CD14-positive monocyte (primary cell): ENCODE measurements at regions of chr9 and their contacts with region 1.

Region 1: DNA sequence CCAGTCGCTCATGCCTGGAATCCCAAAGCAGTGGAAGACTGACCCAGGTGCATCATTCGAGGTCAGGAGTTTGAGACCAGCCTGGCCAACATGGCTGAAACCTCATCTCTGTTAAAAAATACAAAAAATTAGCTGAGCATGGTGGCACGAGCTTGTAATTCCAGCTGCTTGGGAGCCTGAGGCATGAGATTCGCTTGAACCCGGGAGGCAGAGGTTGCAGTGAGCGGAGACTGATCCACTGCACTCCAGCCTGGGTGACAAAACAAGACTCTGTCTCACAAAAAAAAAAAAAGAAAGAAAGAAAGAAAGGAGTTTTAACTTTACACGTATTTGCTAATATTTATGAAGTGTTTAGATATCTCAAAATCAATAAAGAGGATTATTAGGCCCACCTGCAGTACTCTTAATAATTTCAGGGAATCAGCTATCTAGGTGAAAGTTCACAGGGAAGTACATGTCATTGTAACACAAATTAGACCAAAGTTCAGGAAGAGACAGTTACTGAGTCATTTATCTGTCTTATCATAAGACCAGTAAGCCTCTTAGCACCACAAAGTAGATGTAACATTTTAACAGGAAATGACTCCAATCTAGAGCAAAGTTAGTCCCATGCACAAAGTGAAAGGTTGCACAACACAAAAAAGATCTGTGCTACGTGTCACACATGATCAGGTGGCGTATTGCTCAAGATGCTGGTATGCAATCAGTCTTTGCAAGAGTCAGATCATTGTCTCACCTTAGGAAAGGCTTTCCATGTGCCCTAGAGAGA is 34.1 kb upstream of the PLIN2 start:
- DNase-seq: peak; percentile 97 to 100 (median 100)
- H3K4me3 ChIP-seq: peak overlapping the region in 1 of 3 experiments; percentile 65
- H3K4me3 Mint-ChIP-seq: peak overlapping the region; percentile 23 to 54
- H3K27ac ChIP-seq: peak overlapping the region; percentile 98 to 99
- H3K27ac Mint-ChIP-seq: peak overlapping the region; percentile 94 to 100 (median 99)
- H3K4me1 ChIP-seq: peaks cover 51 to 53% of the 10 kb centered on the region in 2 donors
- H3K4me1 Mint-ChIP-seq: peaks cover 45% of the 10 kb centered on the region
- H3K27me3 ChIP-seq: no peaks in the 10 kb centered on the region
- H3K27me3 Mint-ChIP-seq: peaks cover 0 to 7% (median 0%) of the 10 kb centered on the region in 3 donors
- CTCF ChIP-seq: no peak

Region 2: DNA sequence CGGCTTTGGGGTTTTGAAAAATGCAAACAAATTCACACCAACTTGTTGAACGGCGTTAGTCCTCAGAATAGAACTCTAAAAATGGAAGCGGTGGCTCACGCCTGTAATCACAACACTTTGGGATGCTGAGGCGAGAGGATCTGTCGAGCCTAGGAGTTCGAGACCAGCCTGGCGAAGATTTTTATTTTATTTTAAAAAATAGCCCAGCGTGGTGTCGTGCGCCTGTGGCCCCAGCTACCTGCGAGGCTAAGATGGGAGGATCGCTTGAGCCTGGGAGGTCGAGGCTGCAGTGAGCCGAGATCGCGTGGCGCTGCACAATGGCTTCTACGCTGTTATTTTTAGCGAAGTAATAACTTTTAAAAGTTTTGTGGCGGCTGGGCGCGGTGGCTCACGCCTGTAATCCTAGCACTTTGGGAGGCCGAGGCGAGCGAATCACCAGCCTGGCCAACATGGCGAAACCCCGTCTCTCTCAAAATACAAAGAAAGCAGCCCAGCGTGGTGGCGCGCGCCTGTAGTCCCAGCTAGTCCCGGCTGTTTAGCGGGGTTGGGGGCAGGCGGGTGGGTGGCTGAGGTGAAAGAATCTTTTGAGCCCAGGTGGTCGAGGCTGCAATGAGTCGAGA is 33.5 kb before region 1 on chr9:
- intact Hi-C with region 1: loop called in 1 of 2 experiments (anchors 5 kb)
- DNase-seq: peak in 2 of 3 donors; percentile 21 to 34
- H3K4me3 ChIP-seq: peak overlapping the region; percentile 66 to 95 (median 77)
- H3K4me3 Mint-ChIP-seq: peak overlapping the region; percentile 89 to 93
- H3K27ac ChIP-seq: peak overlapping the region; percentile 96 to 97
- H3K27ac Mint-ChIP-seq: peak overlapping the region; percentile 91 to 96 (median 95)
- H3K4me1 ChIP-seq: peaks cover 46 to 53% of the 10 kb centered on the region in 2 donors
- H3K4me1 Mint-ChIP-seq: peaks cover 51% of the 10 kb centered on the region
- H3K27me3 ChIP-seq: no peaks in the 10 kb centered on the region
- H3K27me3 Mint-ChIP-seq: peaks cover 0 to 6% (median 2%) of the 10 kb centered on the region in 3 donors
- CTCF ChIP-seq: no peak

Region 3: DNA sequence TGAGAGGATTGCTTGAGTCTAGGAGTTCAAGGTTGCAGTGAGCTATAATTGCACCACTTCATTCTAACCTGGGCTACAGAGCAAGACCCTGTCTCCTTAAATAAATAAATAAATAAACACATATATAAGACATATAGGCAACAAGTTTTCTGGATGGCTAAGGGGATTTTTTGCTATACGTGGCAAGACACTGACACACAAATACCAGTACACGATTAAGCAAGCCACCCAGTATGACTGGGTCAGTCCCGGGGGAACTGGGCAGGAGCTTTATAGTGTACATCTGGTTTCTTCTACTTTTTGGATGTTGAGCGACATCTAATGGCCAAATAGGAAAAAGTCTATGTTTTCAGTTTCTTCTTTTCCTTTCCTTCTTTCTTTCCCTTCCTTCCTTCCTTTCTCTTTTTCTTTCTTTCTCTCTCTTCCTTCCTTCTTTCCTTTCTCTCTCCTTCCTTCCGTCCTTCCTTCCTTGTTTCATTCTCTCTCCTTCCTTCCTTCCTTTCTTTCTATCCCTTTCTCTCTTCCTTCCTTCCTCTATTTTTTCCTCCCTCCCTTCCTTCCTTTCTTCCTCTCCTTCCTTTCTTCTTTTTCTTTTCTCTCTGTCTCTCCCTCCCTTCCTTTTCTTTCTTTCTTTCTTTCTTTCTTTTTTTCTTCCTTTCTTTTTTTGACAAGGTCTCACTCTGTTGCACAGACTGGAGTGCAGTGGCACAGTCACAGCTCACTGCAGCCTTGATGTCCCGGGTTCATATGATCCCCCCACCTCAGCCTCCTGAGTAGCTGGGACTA is 12.9 kb after region 1 on chr9:
- intact Hi-C with region 1: loop called in 1 of 2 experiments (anchors 1 kb)
- DNase-seq: peak; percentile 89 to 97 (median 93)
- H3K4me3 ChIP-seq: no peak overlapping the region
- H3K4me3 Mint-ChIP-seq: peak overlapping the region in 1 of 2 donors; percentile 43
- H3K27ac ChIP-seq: peak overlapping the region; percentile 10 to 79
- H3K27ac Mint-ChIP-seq: peak overlapping the region; percentile 77 to 91 (median 85)
- H3K4me1 ChIP-seq: peaks cover 26 to 35% of the 10 kb centered on the region in 2 donors
- H3K4me1 Mint-ChIP-seq: peaks cover 33% of the 10 kb centered on the region
- H3K27me3 ChIP-seq: no peaks in the 10 kb centered on the region
- H3K27me3 Mint-ChIP-seq: peaks cover 0 to 7% (median 2%) of the 10 kb centered on the region in 3 donors
- CTCF ChIP-seq: peak; percentile 84